ENCODE measurements at regions of chr10 and their contacts with region 1.

Region 1: DNA sequence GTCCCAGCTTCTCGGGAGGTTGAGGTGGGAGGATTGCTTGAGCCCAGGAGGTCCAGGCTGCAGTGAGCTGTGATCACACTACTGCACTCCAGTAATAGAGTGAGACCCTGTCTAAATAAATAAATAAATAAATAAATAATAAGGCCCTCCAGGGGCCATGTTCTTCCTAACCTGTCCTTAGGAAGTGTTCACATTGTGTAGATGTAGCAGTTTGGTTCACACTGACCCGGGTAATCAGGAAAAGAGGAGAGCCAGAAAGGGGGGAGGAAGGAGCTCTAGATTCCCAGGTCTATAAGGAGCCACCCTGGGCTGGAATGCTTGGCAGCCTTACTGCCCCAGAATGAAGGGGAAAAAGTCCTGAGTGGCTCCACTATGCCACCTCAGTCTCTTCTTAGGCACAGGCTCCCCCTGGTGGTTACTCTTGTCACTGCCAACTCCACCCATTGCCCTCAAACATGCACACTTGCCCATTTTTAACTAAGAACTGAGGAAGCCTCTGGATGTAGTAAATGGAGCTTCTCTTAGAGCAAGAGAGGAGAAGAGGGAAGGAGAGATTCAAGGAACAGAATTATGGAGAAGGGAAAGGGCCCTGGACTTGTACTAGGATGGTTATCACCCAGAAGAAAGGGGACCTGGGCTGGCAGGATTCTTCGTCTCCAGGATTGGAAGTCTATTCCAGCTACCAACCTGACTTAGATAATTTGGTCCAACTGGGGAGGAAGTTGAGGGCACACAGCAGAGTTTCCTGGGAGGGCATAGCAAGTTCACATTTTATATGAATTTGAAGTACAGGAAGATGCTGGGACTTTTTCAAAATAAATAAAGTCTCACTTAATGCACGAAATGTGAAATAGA is 7.8 kb downstream of the HPS6 start:
- DNase-seq: peak; percentile 59
- H3K4me3 ChIP-seq: no peak overlapping the region
- H3K27ac ChIP-seq: no peak overlapping the region
- H3K27me3 ChIP-seq: no peaks in the 10 kb centered on the region
- CTCF ChIP-seq: peak; percentile 97

Region 2: GRCh38 chr10:101858723-101859500 is 214.0 kb before region 1 on chr10:
- CTCF ChIA-PET with region 1: interaction called, 11 read pairs
- POLR2A ChIA-PET with region 1: no interaction called
- DNase-seq: no peak
- H3K4me3 ChIP-seq: no peak overlapping the region
- H3K27ac ChIP-seq: no peak overlapping the region
- H3K27me3 ChIP-seq: no peaks in the 10 kb centered on the region
- CTCF ChIP-seq: no peak

Region 3: DNA sequence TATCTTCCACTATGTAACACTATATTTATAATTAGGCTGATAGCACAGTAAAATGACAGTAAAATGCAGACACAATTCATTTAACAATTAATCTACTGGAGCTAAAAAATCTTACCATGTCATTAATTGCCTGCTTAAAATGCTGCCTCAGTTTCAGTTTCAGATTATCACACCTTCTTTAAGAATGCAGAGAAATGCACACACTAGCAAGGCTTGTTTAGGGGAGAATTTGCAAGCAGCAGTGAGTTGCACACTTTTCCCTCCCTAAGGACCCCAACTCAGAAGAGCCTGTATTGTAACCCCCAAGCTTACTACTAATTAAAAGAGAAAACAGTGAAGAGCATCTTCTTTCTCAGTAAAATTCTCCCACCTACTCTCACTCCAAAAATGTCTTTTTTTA is 149.6 kb before region 1 on chr10:
- CTCF ChIA-PET with region 1: no interaction called
- POLR2A ChIA-PET with region 1: no interaction called
- DNase-seq: no peak
- H3K4me3 ChIP-seq: no peak overlapping the region
- H3K27ac ChIP-seq: no peak overlapping the region
- H3K27me3 ChIP-seq: no peaks in the 10 kb centered on the region
- CTCF ChIP-seq: no peak

Region 4: DNA sequence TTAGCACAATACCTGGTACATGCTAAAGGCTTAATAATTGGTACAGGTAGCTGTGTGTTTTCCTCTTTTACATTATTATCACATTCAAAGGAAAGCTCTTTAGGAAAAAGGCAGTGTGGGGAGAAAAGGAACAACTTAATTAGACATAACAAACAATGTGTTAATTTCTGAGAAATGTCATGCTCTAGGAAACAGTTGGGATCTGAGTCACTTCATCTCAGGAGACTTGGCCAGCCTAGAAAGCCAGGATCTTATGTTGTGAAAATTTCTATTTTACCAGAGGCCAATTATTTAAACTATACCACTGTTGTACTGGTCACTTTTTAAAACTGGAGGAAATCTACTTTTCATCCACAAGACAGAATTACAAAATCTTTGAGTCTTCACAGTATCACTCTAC is 56.5 kb before region 1 on chr10:
- CTCF ChIA-PET with region 1: interaction called, 51 read pairs
- POLR2A ChIA-PET with region 1: no interaction called
- DNase-seq: no peak
- H3K4me3 ChIP-seq: no peak overlapping the region
- H3K27ac ChIP-seq: no peak overlapping the region
- H3K27me3 ChIP-seq: no peaks in the 10 kb centered on the region
- CTCF ChIP-seq: no peak

Region 5: GRCh38 chr10:102055647-102056419 is 17.1 kb before region 1 on chr10 and contains the start of gene ARMH3:
- CTCF ChIA-PET with region 1: interaction called, 26 read pairs
- POLR2A ChIA-PET with region 1: no interaction called
- DNase-seq: peak; percentile 93
- H3K4me3 ChIP-seq: peak within 1 kb of the TSS; percentile 89
- H3K27ac ChIP-seq: peak within 1 kb of the TSS; percentile 77
- H3K27me3 ChIP-seq: no peaks in the 10 kb centered on the region
- CTCF ChIP-seq: no peak
- polyA plus RNA-seq, gene ARMH3: 19.5 and 19.8 TPM in 2 replicates

Region 6: GRCh38 chr10:102101152-102101551 is 28.3 kb after region 1 on chr10:
- CTCF ChIA-PET with region 1: interaction called, 12 read pairs
- POLR2A ChIA-PET with region 1: no interaction called
- DNase-seq: no peak
- H3K4me3 ChIP-seq: no peak overlapping the region
- H3K27ac ChIP-seq: no peak overlapping the region
- H3K27me3 ChIP-seq: no peaks in the 10 kb centered on the region
- CTCF ChIP-seq: no peak

Region 7: DNA sequence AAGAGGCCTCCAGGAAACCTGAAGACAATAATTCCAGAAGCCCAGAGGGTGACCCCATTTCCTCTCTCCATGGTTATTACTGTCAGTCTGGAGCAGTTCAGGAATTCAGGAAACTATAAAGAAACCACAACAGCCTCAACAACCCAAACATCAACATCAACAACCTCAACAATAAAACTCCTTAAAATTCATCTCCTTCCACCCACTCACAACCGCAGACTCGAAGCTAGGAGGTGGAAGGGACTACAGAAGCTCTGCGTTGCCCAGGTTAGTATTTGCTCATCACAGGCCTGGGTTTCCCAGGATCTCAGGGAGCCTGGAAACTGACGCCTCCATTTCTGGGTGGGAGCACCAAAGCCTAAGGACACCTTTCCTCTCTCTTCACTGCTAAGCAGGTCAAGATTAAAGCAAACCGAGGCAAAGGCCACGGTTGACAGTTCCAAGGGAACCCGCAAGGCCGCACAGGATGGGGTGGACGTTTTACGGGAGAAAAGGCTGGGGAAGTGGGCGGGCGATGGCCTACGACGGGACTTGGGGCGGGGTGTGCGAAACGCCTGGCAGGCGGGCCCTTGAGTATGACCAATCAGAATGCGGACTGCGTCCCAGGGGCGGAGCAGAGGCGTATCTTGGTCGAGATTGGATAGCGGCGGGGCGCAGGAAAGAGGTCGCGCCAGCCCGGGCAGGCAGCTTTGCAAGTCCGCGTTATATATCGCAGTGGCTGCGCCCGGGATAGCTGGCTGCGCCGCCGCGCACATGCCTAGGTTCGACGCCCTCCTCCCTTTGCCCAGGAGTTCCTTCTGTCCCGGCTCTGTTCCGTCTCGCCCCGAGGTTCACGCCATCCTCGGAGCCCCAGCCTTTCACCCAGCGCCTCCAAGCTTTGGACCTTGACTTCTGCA is 153.0 kb after region 1 on chr10 and contains the start of gene ELOVL3:
- CTCF ChIA-PET with region 1: no interaction called
- POLR2A ChIA-PET with region 1: no interaction called
- DNase-seq: peak; percentile 81
- H3K4me3 ChIP-seq: peak within 1 kb of the TSS; percentile 49
- H3K27ac ChIP-seq: peak within 1 kb of the TSS; percentile 49
- H3K27me3 ChIP-seq: peaks cover 31% of the 10 kb centered on the region
- CTCF ChIP-seq: no peak
- polyA plus RNA-seq, gene ELOVL3: 0.16 and 0.27 TPM in 2 replicates